Breast epithelium (tissue), 4 donors: ENCODE measurements at regions of chr6 and their contacts with region 1.

Region 1: GRCh38 chr6:133889557-133890403 is 867 bp downstream of the TCF21 start:
- DNase-seq: no peak
- H3K4me3 ChIP-seq: peak overlapping the region in 1 of 3 donors; percentile 1
- H3K27ac ChIP-seq: no peak overlapping the region
- H3K4me1 ChIP-seq: no peaks in the 10 kb centered on the region
- H3K27me3 ChIP-seq: peaks cover 11 to 88% of the 10 kb centered on the region in 2 donors
- CTCF ChIP-seq: no peak
- POLR2A ChIP-seq: no peak

Region 2: GRCh38 chr6:132768051-132768517 is 1121.7 kb before region 1 on chr6:
- intact Hi-C with region 1: no loop called
- DNase-seq: no peak
- H3K4me3 ChIP-seq: no peak overlapping the region
- H3K27ac ChIP-seq: no peak overlapping the region
- H3K4me1 ChIP-seq: no peaks in the 10 kb centered on the region
- H3K27me3 ChIP-seq: no peaks in the 10 kb centered on the region
- CTCF ChIP-seq: peak in 2 of 3 donors; percentile 30 to 43
- POLR2A ChIP-seq: no peak

Region 3: GRCh38 chr6:134870677-134871498 is 981.1 kb after region 1 on chr6:
- intact Hi-C with region 1: no loop called
- DNase-seq: no peak
- H3K4me3 ChIP-seq: no peak overlapping the region
- H3K27ac ChIP-seq: no peak overlapping the region
- H3K4me1 ChIP-seq: no peaks in the 10 kb centered on the region
- H3K27me3 ChIP-seq: no peaks in the 10 kb centered on the region
- CTCF ChIP-seq: no peak
- POLR2A ChIP-seq: no peak

Region 4: GRCh38 chr6:134938896-134939295 is 1049.1 kb after region 1 on chr6:
- intact Hi-C with region 1: no loop called
- DNase-seq: no peak
- H3K4me3 ChIP-seq: no peak overlapping the region
- H3K27ac ChIP-seq: no peak overlapping the region
- H3K4me1 ChIP-seq: no peaks in the 10 kb centered on the region
- H3K27me3 ChIP-seq: no peaks in the 10 kb centered on the region
- CTCF ChIP-seq: no peak
- POLR2A ChIP-seq: no peak

Region 5: GRCh38 chr6:135319819-135320218 is 1430.0 kb after region 1 on chr6:
- intact Hi-C with region 1: loop called (anchors 5 kb)
- DNase-seq: no peak
- H3K4me3 ChIP-seq: no peak overlapping the region
- H3K27ac ChIP-seq: no peak overlapping the region
- H3K4me1 ChIP-seq: no peaks in the 10 kb centered on the region
- H3K27me3 ChIP-seq: no peaks in the 10 kb centered on the region
- CTCF ChIP-seq: no peak
- POLR2A ChIP-seq: no peak